Lower leg skin (tissue), 4 donors: ENCODE measurements at regions of chr19 and their contacts with region 1.

Region 1: GRCh38 chr19:40529093-40529954 is 47.3 kb upstream of the SHKBP1 start:
- DNase-seq: peak; percentile 69 to 97
- H3K4me3 ChIP-seq: no peak overlapping the region
- CTCF ChIP-seq: peak in 1 of 3 donors; percentile 94
- POLR2A ChIP-seq: no peak

Region 2: GRCh38 chr19:40312533-40312932 is 216.8 kb before region 1 on chr19:
- intact Hi-C with region 1: loop called (anchors 10 kb)
- DNase-seq: no peak
- H3K4me3 ChIP-seq: no peak overlapping the region
- CTCF ChIP-seq: no peak
- POLR2A ChIP-seq: no peak

Region 3: GRCh38 chr19:40489882-40490230 is 39.5 kb before region 1 on chr19:
- intact Hi-C with region 1: no loop called
- DNase-seq: no peak
- H3K4me3 ChIP-seq: no peak overlapping the region
- CTCF ChIP-seq: no peak
- POLR2A ChIP-seq: no peak

Region 4: DNA sequence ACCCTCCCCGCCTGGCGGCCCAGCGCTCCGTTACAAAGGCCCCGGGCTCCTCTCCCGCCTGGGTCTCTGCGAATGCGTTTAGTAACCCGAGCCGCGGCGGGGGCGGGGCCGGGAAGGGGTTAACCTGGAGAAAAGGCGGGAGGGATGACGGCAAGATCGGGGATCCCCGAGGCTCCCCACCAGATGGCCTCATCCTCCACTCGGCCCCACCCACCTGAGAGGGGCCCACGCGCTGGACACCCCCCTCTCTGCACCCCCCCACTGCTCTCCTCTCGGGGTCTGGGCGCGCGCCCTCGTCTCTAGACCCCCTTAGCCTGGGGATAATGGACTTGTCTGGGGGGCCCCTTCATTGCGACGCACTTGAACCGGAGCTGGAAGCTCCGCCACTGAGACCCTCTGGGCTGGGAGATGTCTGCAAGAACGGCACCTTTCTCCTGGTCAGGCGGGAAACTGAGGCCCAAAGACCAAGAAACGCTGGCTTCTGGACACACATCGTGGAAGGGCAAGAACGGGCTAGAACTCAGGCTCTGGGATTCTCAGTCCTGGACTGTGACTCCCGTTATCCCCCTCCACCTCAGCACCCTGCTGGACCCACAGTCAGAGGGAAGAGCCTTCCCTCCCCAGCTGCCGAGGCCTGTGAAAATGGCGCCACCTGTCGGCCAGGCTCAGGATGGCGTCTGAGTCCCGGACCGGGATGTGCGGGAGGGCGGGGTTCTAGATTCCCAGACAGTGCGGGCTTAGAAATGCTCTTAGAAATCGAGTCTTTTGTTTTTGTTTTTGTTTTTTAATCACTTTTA is 69.0 kb after region 1 on chr19:
- intact Hi-C with region 1: loop called (anchors 10 kb)
- DNase-seq: peak; percentile 86 to 99
- H3K4me3 ChIP-seq: no peak overlapping the region
- CTCF ChIP-seq: peak in 1 of 3 donors; percentile 89
- POLR2A ChIP-seq: no peak

Region 5: GRCh38 chr19:40633207-40633606 is 103.9 kb after region 1 on chr19:
- intact Hi-C with region 1: loop called (anchors 5 kb)
- DNase-seq: no peak
- H3K4me3 ChIP-seq: no peak overlapping the region
- CTCF ChIP-seq: no peak
- POLR2A ChIP-seq: no peak

Region 6: DNA sequence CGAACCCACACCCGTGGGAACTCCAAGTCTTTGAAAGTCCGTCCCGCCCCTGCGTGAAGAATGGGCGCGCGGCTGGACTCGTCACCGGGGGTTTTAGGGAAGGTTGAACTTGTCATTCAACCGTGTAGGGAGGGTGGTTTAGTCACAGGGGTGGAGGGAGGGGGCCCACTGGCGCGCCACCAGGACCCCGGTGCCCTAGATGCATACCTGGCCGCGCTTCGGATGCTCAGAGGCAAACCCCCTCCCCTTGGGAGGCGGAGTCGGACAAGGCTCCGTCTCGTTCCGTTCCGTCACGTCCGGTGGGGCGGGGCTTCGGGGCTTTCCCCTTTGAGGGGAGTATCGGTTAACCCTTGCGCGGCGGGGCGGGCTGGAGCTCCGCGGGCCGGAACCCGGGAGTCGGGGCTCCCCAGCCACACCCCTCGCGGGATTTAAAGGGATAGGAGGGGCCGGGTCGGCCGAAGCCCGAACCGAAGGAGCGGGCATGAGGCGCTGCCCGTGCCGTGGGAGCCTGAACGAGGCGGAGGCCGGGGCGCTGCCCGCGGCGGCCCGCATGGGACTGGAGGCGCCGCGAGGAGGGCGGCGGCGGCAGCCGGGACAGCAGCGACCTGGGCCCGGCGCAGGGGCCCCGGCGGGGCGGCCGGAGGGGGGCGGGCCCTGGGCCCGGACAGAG is 187.5 kb after region 1 on chr19 and contains the starts of genes COQ8B and ITPKC:
- intact Hi-C with region 1: no loop called
- DNase-seq: peak; percentile 99 to 100
- H3K4me3 ChIP-seq: peak within 1 kb of the TSS; percentile 79
- CTCF ChIP-seq: no peak
- POLR2A ChIP-seq: peak in 1 of 2 donors; percentile 17
- total RNA-seq, gene COQ8B: 40.2 to 58.7 (median 44.1) TPM
- total RNA-seq, gene ITPKC: 83.1 to 104 (median 93.6) TPM

Region 7: GRCh38 chr19:41353466-41354342 is 824.4 kb after region 1 on chr19 and contains the start of gene TGFB1:
- intact Hi-C with region 1: no loop called
- DNase-seq: peak; percentile 82 to 98
- H3K4me3 ChIP-seq: peak within 1 kb of the TSS; percentile 61
- CTCF ChIP-seq: peak in 1 of 3 donors; percentile 79
- POLR2A ChIP-seq: no peak
- total RNA-seq, gene TGFB1: 11.4 to 26.9 (median 22.2) TPM